ENCODE measurements at regions of chrX and their contacts with region 1.

Region 1: DNA sequence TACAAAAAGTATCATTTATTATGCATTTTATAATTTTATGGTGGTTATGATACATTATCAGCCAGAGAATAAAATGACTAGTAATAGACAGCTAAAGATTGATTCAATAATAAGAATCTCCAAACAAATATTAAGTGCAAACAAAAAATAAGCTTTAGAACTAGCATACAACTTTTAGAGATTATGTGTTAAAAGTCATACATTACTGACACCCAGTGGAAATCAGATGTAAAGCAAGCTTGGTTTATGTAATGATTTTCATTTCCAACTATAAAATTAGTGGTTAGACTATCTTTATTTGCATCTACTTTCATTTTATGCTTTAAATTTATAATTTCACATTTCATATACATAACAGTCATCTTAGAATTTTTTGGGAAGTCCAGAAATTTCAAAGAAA is 57.7 kb downstream of the IL13RA2 start:
- DNase-seq: peak; percentile 52
- ATAC-seq: no peak
- H3K4me3 ChIP-seq: no peak overlapping the region
- H3K27ac ChIP-seq: no peak overlapping the region
- H3K4me1 ChIP-seq: no peaks in the 10 kb centered on the region
- H3K27me3 ChIP-seq: no peaks in the 10 kb centered on the region
- CTCF ChIP-seq: peak; percentile 68

Region 2: DNA sequence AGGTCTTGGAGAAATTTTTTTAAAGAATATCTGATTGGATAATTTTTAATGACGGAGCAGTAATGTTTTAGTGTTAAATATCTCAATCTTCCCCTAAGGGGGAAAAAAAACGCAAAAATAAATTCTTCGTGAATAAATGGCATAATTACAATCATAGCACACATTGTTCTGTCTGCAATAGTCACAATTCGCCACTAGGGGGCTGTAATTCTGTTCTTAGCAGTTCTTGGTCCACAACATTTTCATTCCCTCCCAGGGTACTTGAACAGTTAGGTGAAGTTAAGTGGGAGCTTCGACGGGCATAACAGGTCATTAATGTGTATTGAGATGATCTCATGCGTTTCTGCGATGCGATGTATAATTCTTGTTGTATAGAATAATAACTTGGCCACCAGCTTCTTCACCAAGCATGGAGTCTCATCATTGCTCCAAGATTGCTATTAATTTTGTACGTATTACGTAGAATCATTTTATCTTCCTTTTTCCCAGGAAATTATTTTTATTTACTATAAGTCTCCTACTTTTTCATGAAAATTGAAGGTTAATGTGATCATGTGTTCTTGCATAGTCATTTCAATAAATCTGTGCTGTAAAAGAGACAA is 348.6 kb before region 1 on chrX:
- CTCF ChIA-PET with region 1: no interaction called
- POLR2A ChIA-PET with region 1: no interaction called
- intact Hi-C with region 1: loop called (anchors 5 kb)
- DNase-seq: peak; percentile 65
- ATAC-seq: peak; percentile 35; the same call in 1 of the 2 replicates
- H3K4me3 ChIP-seq: no peak overlapping the region
- H3K27ac ChIP-seq: no peak overlapping the region
- H3K4me1 ChIP-seq: no peaks in the 10 kb centered on the region
- H3K27me3 ChIP-seq: no peaks in the 10 kb centered on the region
- CTCF ChIP-seq: peak; percentile 79

Region 3: GRCh38 chrX:114626323-114626722 is 333.4 kb before region 1 on chrX:
- CTCF ChIA-PET with region 1: interaction called, 4 read pairs
- POLR2A ChIA-PET with region 1: no interaction called
- intact Hi-C with region 1: loop called (anchors 5 kb)
- DNase-seq: peak; percentile 39
- ATAC-seq: no peak
- H3K4me3 ChIP-seq: no peak overlapping the region
- H3K27ac ChIP-seq: no peak overlapping the region
- H3K4me1 ChIP-seq: no peaks in the 10 kb centered on the region
- H3K27me3 ChIP-seq: no peaks in the 10 kb centered on the region
- CTCF ChIP-seq: peak; percentile 55; the same call in 1 of the 2 replicates

Region 4: GRCh38 chrX:115089419-115089818 is 129.7 kb after region 1 on chrX:
- CTCF ChIA-PET with region 1: no interaction called
- POLR2A ChIA-PET with region 1: no interaction called
- intact Hi-C with region 1: no loop called
- DNase-seq: no peak
- ATAC-seq: no peak
- H3K4me3 ChIP-seq: no peak overlapping the region
- H3K27ac ChIP-seq: no peak overlapping the region
- H3K4me1 ChIP-seq: no peaks in the 10 kb centered on the region
- H3K27me3 ChIP-seq: no peaks in the 10 kb centered on the region
- CTCF ChIP-seq: no peak

Measured in PC-3 (cell line).